Colonic mucosa (tissue), 4 donors: ENCODE measurements at regions of chr7 and their contacts with region 1.

Region 1: GRCh38 chr7:17640730-17641377 is 299.4 kb downstream of the SNX13 start:
- DNase-seq: peak; percentile 42
- H3K4me3 ChIP-seq: no peak overlapping the region
- H3K27ac ChIP-seq: no peak overlapping the region
- H3K4me1 ChIP-seq: no peaks in the 10 kb centered on the region
- H3K27me3 ChIP-seq: no peaks in the 10 kb centered on the region
- CTCF ChIP-seq: peak; percentile 49

Region 2: GRCh38 chr7:16926283-16926682 is 714.6 kb before region 1 on chr7:
- intact Hi-C with region 1: loop called (anchors 10 kb)
- DNase-seq: peak; percentile 60
- H3K4me3 ChIP-seq: no peak overlapping the region
- H3K27ac ChIP-seq: no peak overlapping the region
- H3K4me1 ChIP-seq: no peaks in the 10 kb centered on the region
- H3K27me3 ChIP-seq: no peaks in the 10 kb centered on the region
- CTCF ChIP-seq: peak; percentile 77

Region 3: DNA sequence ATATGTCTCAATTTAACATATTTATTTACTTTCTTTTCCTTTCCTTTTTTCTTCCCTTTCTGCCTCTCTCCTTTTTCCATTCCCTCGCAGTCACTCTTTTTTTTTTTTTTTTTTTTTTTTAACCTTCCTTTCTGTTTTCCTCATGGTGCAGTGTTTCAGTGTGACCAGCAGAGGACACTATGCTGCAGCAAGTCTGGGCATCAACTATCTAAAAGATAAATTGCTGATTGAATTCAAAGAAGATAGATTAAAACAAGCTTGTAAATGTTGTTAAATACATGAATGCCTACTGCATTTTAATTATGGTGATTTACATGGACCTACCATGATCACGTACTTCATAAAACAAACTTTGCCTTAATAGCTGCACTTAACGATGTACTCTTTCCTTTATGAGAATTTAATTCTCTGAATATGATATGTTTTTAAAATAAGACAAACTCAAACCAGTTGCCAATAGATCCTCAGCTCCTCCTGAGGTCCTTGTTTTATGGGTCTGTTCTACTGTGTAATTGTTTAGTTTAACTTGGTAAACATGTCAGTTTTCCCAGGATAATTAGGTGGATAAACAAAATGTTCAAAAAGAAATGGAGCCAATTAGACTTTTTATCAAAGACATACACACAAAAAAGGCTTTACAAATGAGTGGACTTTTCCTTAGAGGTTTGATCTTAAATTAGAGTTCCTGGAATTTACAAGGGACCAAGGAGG is 658.1 kb before region 1 on chr7:
- intact Hi-C with region 1: loop called (anchors 10 kb)
- DNase-seq: no peak
- H3K4me3 ChIP-seq: no peak overlapping the region
- H3K27ac ChIP-seq: no peak overlapping the region
- H3K4me1 ChIP-seq: peaks cover 5% of the 10 kb centered on the region
- H3K27me3 ChIP-seq: no peaks in the 10 kb centered on the region
- CTCF ChIP-seq: peak; percentile 86

Region 4: DNA sequence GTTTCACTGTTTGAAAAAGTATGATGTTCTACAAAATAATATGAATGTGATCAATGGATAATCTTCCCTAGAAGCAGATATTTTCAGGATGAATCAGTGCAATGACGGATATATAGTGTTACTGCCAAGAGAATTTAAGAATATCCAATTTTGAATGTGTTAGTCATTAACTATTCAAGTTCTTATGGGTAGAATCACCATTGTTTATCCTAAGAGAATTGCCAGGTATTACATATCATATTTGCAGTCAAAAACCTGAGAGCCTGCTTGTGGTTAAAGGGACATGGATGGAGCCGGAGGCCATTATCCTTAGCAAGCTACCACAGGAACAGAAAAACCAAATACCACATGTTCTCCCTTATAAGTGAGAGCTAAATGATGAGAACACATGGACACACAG is 315.5 kb before region 1 on chr7:
- intact Hi-C with region 1: no loop called
- DNase-seq: no peak
- H3K4me3 ChIP-seq: no peak overlapping the region
- H3K27ac ChIP-seq: no peak overlapping the region
- H3K4me1 ChIP-seq: peaks cover 4% of the 10 kb centered on the region
- H3K27me3 ChIP-seq: no peaks in the 10 kb centered on the region
- CTCF ChIP-seq: no peak

Region 5: DNA sequence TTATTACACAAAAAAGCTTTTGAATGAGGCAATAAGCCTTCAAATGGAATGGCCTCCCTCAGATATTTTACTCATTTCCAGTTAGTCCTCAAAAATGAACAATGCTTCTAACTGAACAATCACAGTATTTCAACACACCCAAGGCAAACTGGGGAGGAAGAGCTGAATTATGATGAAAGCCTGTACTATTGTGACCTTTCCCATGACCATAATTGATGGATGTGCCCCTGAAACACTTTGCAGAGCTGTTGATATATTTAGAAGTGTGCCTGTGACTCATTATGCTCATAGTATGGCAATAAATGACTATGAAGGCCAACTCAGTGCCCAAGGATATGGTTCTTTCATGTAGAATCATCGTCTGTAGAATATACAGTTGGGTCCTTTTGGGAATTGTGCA is 94.3 kb before region 1 on chr7:
- intact Hi-C with region 1: loop called (anchors 10 kb)
- DNase-seq: no peak
- H3K4me3 ChIP-seq: no peak overlapping the region
- H3K27ac ChIP-seq: no peak overlapping the region
- H3K4me1 ChIP-seq: no peaks in the 10 kb centered on the region
- H3K27me3 ChIP-seq: no peaks in the 10 kb centered on the region
- CTCF ChIP-seq: no peak

Region 6: DNA sequence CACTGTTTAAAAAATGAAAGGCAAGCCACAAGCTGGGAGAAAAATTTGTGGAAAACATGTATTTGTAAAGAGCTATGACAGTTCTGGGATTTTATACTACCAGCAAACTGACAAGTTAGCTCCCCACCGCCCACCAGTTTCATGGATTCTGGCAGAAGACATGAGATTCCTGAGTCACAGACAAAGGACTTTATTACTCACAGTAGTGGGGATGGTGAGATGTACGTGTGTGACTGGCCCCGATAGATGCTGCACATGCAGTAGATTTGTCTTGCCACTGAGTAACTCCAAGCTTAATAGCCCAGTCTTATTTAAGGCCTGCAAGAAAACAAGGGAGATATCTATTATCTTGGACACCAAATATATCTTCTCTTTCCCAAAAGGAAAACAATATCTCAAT is 60.7 kb before region 1 on chr7:
- intact Hi-C with region 1: loop called (anchors 10 kb)
- DNase-seq: no peak
- H3K4me3 ChIP-seq: no peak overlapping the region
- H3K27ac ChIP-seq: no peak overlapping the region
- H3K4me1 ChIP-seq: no peaks in the 10 kb centered on the region
- H3K27me3 ChIP-seq: no peaks in the 10 kb centered on the region
- CTCF ChIP-seq: no peak